Activated CD4-positive, alpha-beta T cell treated with anti-CD3 and anti-CD28 coated beads for 36 hours (primary cell): ENCODE measurements at regions of chr2 and their contacts with region 1.

Region 1: DNA sequence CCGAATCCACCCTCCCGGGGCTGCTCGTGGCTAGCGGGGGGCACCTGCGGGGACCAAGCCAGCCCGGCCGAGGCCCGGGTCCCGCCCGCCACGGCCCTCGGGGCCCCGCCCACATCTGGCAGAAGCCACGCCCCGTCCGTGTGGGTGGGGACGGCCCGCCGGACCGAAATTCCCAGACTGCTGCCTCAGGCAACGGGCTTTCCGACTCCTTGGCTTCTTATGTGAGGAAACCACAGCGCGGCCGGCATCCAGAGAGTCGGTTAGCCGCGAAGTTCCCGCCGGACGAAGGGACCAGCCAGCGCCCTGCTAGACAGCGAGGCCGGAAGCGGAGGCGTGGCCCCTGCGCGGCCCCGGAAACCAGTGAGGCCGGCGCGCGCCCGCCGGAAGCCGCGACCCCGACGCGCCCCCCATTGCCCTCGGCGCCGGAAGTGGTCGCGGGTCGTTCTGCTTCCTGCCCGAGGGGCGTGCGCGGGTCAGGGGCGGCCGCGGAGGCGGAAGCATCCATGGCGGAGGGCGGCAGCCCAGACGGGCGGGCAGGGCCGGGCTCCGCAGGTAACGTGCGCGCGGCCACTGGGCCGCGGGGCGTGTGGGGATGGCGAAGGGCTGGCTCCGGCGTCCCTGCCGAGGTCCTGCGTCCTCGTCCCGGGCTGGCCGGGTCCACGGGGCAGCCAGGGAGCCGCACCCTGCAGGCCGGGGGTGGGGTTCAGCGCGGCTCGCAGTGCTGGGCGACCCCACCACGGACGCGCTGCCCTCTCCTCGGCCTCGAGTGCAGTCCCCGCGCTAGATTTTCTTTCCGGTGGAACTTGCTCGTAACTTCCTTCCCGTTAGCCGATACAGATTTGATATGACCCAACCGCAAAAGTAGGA is at the start of gene ASB1:
- DNase-seq: peak; percentile 84
- ATAC-seq: peak; percentile 81
- H3K4me3 Mint-ChIP-seq: peak within 1 kb of the TSS; percentile 91
- H3K27ac Mint-ChIP-seq: peak within 1 kb of the TSS; percentile 96
- H3K4me1 Mint-ChIP-seq: peaks cover 35% of the 10 kb centered on the region
- H3K27me3 Mint-ChIP-seq: no peaks in the 10 kb centered on the region
- total RNA-seq, gene ASB1: 31.7 to 33.4 TPM

Region 2: DNA sequence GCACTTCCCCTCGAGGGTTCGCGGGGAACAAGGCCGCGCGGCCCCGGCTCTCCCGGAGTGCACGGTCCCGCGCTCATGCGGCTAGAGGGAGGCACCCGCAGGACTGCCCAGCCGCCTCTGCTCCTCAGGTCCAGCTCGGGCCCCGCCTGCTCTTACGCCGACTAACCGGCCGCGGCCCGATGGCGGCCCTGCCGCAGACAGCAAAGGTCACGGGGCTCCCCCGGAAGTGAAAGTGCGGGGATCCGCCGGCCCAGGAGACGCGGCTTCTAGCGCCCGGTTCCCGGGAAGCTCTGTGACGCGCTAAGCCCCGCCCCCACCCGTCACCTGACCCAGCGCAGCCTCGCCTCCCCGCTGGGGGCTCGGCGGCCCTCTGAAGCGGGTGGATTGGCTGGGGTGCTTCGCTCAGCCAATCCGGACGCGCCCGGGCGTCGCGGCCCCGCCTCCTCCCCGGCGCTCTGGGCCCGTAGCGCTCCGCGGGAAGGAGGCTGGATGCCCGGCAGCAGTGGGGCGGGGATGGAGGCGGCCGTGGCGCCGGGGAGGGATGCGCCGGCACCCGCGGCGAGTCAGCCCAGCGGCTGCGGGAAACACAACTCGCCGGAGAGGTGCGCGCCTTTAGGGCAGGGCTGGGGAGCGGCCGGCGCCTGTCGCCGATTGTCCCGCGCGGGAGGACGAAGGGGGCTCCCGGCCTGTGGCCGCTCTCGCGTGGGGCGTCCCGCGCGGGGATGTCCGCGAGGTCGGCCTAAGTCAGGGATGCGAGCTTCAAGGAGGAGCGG is 366.1 kb before region 1 on chr2 and contains the start of gene SCLY:
- CTCF ChIA-PET with region 1: no interaction called
- POLR2A ChIA-PET with region 1: no interaction called
- intact Hi-C with region 1: loop called in 1 of 2 experiments (anchors 1 kb)
- DNase-seq: peak; percentile 99
- ATAC-seq: peak; percentile 97
- H3K4me3 Mint-ChIP-seq: peak within 1 kb of the TSS; percentile 80
- H3K27ac Mint-ChIP-seq: peak within 1 kb of the TSS; percentile 96
- H3K4me1 Mint-ChIP-seq: peaks cover 49% of the 10 kb centered on the region
- H3K27me3 Mint-ChIP-seq: peaks cover 10% of the 10 kb centered on the region
- total RNA-seq, gene SCLY: 59.2 to 60.5 TPM

Region 3: GRCh38 chr2:238320246-238320647 is 106.6 kb before region 1 on chr2 and contains the start of gene TRAF3IP1:
- CTCF ChIA-PET with region 1: no interaction called
- POLR2A ChIA-PET with region 1: no interaction called
- intact Hi-C with region 1: loop called (anchors 1 to 5 kb)
- DNase-seq: peak; percentile 91
- ATAC-seq: peak; percentile 96
- H3K4me3 Mint-ChIP-seq: peak within 1 kb of the TSS; percentile 70
- H3K27ac Mint-ChIP-seq: no peak within 1 kb of the TSS
- H3K4me1 Mint-ChIP-seq: peaks cover 23% of the 10 kb centered on the region
- H3K27me3 Mint-ChIP-seq: peaks cover 3% of the 10 kb centered on the region
- total RNA-seq, gene TRAF3IP1: 8.5 to 9.8 TPM

Region 4: DNA sequence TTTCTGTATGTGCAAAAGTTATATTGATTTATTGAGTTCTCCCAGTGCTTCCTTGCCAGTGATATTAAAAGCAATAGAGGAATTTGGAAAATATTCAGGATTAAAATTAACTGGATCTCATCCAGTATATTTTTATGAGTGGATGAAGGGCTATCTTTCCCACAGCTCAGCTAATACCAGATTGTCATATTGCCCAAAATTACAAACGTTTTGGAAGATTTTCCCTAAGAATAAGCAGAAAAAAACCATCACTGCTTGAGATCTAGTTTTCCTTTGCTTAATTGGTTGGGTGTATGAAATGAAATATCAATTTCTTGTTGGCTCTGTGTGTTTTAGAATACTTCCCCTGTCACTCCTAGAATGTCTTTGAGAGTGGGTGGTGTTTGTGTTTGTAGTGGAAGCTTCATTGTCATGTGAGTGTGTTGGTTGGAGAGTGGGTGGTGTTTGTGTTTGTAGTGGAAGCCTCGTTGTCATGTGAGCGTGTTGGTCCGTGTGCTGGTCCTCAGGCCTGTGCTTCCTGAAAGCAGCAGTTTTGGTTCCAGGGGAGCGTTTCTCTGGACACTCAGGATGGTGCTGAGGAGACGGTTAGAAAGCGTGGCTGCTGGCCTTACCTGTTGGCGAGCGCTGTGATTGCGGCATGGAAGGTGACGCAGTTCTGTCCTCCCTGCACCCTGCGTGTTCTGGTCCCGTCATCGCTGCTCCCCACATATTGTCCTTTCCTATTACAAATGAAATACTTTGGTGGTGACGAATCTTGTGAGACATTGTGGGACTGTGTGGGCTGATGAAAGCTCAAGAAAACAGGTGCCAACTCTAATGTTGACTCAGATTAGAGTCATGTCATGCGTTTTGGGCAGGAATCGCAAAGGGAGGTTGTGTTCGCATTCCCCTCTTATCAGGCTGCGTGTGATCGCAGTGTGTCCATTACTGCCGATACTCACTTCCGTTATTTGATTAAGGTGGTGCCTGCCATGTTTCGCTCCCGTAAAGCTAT is 12.4 kb after region 1 on chr2:
- CTCF ChIA-PET with region 1: interaction called, 3 read pairs
- POLR2A ChIA-PET with region 1: interaction called, 3 read pairs
- intact Hi-C with region 1: loop called (anchors 1 kb)
- DNase-seq: peak; percentile 84
- ATAC-seq: peak; percentile 93
- H3K4me3 Mint-ChIP-seq: peak overlapping the region; percentile 55
- H3K27ac Mint-ChIP-seq: peak overlapping the region; percentile 80
- H3K4me1 Mint-ChIP-seq: peaks cover 47% of the 10 kb centered on the region
- H3K27me3 Mint-ChIP-seq: no peaks in the 10 kb centered on the region

Region 5: GRCh38 chr2:240021488-240022104 is 1594.8 kb after region 1 on chr2:
- CTCF ChIA-PET with region 1: no interaction called
- POLR2A ChIA-PET with region 1: no interaction called
- intact Hi-C with region 1: loop called in 1 of 2 experiments (anchors 5 kb)
- DNase-seq: peak; percentile 83
- ATAC-seq: peak; percentile 28
- H3K4me3 Mint-ChIP-seq: no peak overlapping the region
- H3K27ac Mint-ChIP-seq: no peak overlapping the region
- H3K4me1 Mint-ChIP-seq: peaks cover 25% of the 10 kb centered on the region
- H3K27me3 Mint-ChIP-seq: no peaks in the 10 kb centered on the region